ENCODE measurements at regions of chr1 and their contacts with region 1.

Region 1: DNA sequence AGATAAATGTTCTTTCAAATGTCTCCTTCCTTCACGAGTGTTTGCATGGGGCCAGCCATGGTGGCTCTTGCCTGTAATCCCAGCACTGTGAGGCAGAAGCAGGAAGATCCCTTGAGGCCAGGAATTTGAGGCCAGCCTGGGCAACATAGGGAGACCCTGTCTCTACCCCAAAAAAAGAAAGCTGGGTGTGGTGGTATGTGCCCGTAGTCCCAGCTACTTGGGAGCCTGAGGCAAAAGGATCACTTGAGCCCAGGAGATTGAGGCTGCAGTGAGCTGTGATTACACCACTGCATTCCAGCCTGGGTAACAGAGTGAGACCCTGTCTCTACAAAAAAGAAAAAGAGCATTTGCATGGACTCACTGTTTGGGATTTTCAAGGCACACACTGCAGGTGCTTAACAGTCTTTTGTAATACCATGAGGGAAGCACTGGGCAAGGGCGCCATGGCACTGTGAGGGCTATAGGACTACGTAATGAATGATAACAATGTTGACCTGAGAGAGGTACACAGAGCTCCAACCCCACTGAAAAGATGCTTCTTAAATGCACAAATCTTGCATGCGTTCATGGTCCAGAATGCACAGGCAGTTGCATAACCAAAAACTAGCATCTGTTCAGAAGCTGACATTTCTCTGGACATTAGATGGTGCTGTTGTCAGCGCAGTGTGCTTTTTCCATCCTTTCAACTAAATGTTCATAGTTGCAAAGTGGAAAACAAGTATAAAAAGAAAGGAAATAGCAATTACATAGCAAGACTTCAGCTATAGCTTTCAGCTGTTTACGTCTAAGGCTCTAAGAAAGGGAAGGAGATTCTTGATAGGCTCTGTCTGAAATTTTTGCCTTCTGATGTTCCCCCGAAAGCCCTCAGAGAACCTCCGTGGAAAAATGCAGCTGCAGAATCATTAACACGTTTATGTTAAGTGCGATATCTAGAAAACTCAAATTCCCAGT is 7.8 kb upstream of the TARBP1 start:
- DNase-seq: peak in 1 of 2 donors; percentile 46
- H3K4me3 ChIP-seq: no peak overlapping the region
- H3K27ac ChIP-seq: peak overlapping the region; percentile 39 to 61
- H3K4me1 ChIP-seq: no peaks in the 10 kb centered on the region
- H3K27me3 ChIP-seq: no peaks in the 10 kb centered on the region
- CTCF ChIP-seq: peak; percentile 72 to 86 (median 82)
- POLR2A ChIP-seq: no peak

Region 2: DNA sequence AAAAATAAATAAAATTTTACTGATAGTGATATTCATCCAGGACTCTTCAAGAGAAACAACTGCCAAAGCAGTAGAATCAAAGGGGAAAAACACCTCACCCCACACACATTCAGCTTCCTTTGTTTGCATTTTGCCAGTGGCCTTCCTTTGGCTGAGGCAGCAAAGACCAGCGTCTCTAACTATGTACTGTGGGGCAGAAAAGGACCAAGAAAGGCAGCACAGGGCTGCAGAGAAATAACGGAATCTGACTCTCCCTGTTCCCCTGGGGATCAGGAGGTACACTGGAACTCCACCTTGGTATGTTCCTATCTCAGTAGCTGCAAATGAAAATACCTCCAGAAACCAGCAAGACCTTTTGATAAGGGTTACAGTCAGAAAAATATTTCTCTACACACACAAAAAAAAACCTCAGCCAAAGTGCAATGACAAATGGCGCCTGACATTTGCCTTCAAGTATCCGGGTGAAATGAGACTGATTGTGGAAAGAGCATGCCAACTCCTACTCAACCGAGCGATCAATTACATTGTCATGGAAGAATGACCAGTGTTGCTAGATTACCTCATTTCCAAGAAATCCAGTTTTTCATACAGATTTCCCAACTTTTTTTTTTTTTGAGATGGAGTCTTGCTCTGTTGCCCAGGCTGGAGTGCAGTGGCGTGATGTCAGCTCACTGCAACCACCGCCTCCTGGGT is 58.7 kb before region 1 on chr1:
- intact Hi-C with region 1: no loop called
- DNase-seq: no peak
- H3K4me3 ChIP-seq: no peak overlapping the region
- H3K27ac ChIP-seq: no peak overlapping the region
- H3K4me1 ChIP-seq: no peaks in the 10 kb centered on the region
- H3K27me3 ChIP-seq: no peaks in the 10 kb centered on the region
- CTCF ChIP-seq: no peak
- POLR2A ChIP-seq: no peak

Region 3: GRCh38 chr1:235011599-235012435 is 525.0 kb after region 1 on chr1:
- intact Hi-C with region 1: no loop called
- DNase-seq: peak; percentile 80
- H3K4me3 ChIP-seq: no peak overlapping the region
- H3K27ac ChIP-seq: peak overlapping the region; percentile 22 to 47
- H3K4me1 ChIP-seq: no peaks in the 10 kb centered on the region
- H3K27me3 ChIP-seq: no peaks in the 10 kb centered on the region
- CTCF ChIP-seq: no peak
- POLR2A ChIP-seq: no peak

Region 4: DNA sequence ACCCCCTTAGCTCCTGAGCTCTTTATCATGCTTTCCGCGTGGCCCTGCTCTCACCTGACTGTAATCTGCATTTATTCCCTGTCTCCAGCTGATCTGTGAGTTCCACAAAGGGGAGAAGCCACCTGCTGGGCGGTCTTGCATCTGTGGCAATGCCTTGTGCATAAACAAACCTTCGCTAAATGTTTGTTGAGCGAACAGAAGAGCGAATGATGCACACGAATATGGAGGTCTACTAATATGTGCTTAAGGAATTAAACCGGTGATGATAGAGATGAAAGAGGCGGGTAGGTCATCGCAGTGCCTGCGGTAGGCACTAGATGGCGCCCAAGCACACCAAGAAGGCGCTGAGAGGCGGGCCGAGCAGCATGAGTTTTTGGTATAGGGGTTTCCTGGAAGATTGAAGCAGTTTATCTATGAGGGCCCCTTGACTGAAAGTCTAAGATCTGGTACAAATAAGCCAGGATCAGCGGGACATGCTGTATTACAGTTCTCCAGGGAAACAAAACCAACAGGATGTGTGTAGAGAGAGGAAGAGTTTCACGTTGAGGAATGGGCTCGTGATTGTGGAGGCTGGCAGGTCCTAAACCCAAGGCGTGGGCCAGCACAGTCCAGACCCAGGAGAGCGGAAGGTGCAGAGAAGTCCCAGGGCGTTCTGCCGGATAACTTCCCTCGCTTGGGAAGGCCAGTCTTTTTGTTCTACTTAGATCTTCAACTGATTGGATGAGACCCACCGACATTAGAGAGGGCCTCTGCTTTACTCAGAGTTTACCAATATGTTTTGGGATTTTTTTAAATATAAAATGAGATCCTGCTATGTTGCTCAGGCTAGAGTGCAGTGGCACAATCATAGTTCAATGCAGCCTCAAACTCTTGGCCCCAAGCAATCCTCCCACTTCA is 607.2 kb after region 1 on chr1:
- intact Hi-C with region 1: loop called (anchors 5 kb)
- DNase-seq: peak; percentile 77 to 83
- H3K4me3 ChIP-seq: no peak overlapping the region
- H3K27ac ChIP-seq: no peak overlapping the region
- H3K4me1 ChIP-seq: no peaks in the 10 kb centered on the region
- H3K27me3 ChIP-seq: no peaks in the 10 kb centered on the region
- CTCF ChIP-seq: peak; percentile 83 to 92 (median 86)
- POLR2A ChIP-seq: no peak

Measured in uterus (tissue), 4 donors.